ENCODE measurements at regions of chr1 and their contacts with region 1.

Region 1: GRCh38 chr1:227654858-227655752 is 80.0 kb downstream of the JMJD4 start:
- DNase-seq: no peak
- ATAC-seq: no peak
- H3K4me3 ChIP-seq: no peak overlapping the region
- H3K27ac ChIP-seq: no peak overlapping the region
- H3K4me1 ChIP-seq: no peaks in the 10 kb centered on the region
- H3K27me3 ChIP-seq: no peaks in the 10 kb centered on the region
- CTCF ChIP-seq: no peak

Region 2: DNA sequence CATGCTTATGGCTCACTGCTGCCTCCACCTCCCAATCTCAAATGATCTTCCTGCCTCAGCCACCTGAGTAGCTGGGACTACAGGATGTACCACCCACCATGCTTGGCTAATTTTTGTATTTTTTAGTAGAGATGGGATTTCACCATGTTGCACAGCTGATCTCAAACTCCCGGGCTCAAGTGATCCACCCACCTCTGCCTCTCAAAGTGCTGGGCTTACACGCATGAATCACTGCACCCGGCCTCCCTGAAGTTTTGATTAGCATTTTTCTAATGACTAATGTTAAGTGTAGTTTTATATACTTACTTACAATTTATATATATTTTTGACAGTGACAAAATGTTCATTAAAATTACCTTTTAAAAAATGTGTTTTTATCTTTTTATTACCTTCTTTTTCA is 50.7 kb before region 1 on chr1:
- intact Hi-C with region 1: loop called in 1 of 3 experiments (anchors 10 kb)
- DNase-seq: no peak
- ATAC-seq: no peak
- H3K4me3 ChIP-seq: no peak overlapping the region
- H3K27ac ChIP-seq: no peak overlapping the region
- H3K4me1 ChIP-seq: no peaks in the 10 kb centered on the region
- H3K27me3 ChIP-seq: no peaks in the 10 kb centered on the region
- CTCF ChIP-seq: no peak

Region 3: GRCh38 chr1:227712648-227713047 is 57.5 kb after region 1 on chr1:
- intact Hi-C with region 1: no loop called
- DNase-seq: no peak
- ATAC-seq: no peak
- H3K4me3 ChIP-seq: no peak overlapping the region
- H3K27ac ChIP-seq: no peak overlapping the region
- H3K4me1 ChIP-seq: no peaks in the 10 kb centered on the region
- H3K27me3 ChIP-seq: no peaks in the 10 kb centered on the region
- CTCF ChIP-seq: no peak

Measured in pancreas (tissue), 10 donors.